Activated B cell treated with CpG ODN at 0.5 μM for 24 hours (primary cell): ENCODE measurements at regions of chr3 and their contacts with region 1.

Region 1: GRCh38 chr3:101902041-101902440 is 52.7 kb downstream of the NFKBIZ start:
- DNase-seq: no peak
- ATAC-seq: peak; percentile 56
- H3K4me3 Mint-ChIP-seq: peak overlapping the region; percentile 36
- H3K27ac Mint-ChIP-seq: peak overlapping the region; percentile 91
- H3K4me1 Mint-ChIP-seq: peaks cover 61% of the 10 kb centered on the region
- H3K27me3 Mint-ChIP-seq: no peaks in the 10 kb centered on the region
- CTCF ChIP-seq: no peak

Region 2: DNA sequence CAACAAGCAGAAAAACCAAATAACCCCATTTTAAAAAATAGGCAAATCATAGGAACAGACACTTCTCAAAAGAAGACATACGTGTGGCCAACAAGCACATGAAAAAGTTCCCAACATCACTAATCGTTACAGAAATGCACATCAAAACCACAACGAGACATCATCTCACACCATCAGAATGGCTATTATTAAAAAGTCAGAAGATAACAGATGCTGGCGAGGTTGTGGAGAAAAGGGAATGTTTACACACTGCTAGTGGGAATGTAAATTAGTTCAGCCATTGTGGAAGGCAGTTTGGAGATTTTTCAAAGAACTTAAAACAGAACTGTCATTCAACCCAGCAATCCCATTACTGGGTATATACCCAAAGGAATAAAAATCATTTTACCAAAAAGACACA is 969.5 kb before region 1 on chr3:
- CTCF ChIA-PET with region 1: no interaction called
- POLR2A ChIA-PET with region 1: no interaction called
- intact Hi-C with region 1: no loop called
- DNase-seq: no peak
- ATAC-seq: no peak
- H3K4me3 Mint-ChIP-seq: no peak overlapping the region
- H3K27ac Mint-ChIP-seq: no peak overlapping the region
- H3K4me1 Mint-ChIP-seq: no peaks in the 10 kb centered on the region
- H3K27me3 Mint-ChIP-seq: no peaks in the 10 kb centered on the region
- CTCF ChIP-seq: no peak

Region 3: DNA sequence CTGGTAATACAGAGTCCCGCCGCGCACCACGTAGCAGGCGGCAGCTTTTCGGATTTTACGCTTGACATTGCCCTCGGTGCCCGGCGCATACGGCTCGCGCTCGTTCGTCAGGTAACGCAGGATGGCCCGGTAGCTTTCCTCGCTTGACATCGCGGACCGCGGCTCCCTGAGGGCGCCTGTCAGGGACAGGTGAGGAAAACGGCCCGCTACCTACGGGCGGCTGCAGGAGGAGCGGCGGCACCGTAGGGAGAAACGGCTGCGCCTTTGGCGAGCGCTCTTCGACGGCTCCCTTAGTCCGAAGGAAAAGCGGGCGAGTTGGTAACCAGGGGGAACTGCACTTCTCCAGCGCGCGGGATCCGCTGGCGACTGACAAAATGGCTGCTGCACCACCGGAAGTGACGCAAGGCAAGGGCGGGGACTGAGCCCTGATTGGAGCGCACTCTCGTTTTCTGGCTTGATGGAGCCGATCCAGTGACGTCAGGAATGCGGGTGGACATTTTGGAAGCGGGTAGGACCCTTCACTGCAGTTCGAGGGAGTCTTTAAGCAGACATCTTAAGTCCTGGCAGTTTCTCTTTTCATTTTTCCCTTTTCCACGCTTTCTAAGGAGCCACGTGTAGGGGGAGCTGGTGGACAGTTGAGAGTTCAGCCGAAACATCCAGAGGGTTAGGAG is 225.1 kb before region 1 on chr3 and contains the start of gene ZBTB11:
- CTCF ChIA-PET with region 1: no interaction called
- POLR2A ChIA-PET with region 1: no interaction called
- intact Hi-C with region 1: loop called (anchors 5 kb)
- DNase-seq: peak; percentile 99
- ATAC-seq: peak; percentile 68
- H3K4me3 Mint-ChIP-seq: peak within 1 kb of the TSS; percentile 93
- H3K27ac Mint-ChIP-seq: peak within 1 kb of the TSS; percentile 96
- H3K4me1 Mint-ChIP-seq: peaks cover 56% of the 10 kb centered on the region
- H3K27me3 Mint-ChIP-seq: no peaks in the 10 kb centered on the region
- CTCF ChIP-seq: no peak
- total RNA-seq, gene ZBTB11: 26.2 and 28.7 TPM in 2 replicates

Region 4: GRCh38 chr3:101827211-101828174 is 74.5 kb before region 1 on chr3:
- CTCF ChIA-PET with region 1: no interaction called
- POLR2A ChIA-PET with region 1: interaction called, 5 read pairs
- intact Hi-C with region 1: loop called (anchors 2 kb)
- DNase-seq: peak; percentile 68
- ATAC-seq: peak; percentile 86
- H3K4me3 Mint-ChIP-seq: peak overlapping the region; percentile 87
- H3K27ac Mint-ChIP-seq: peak overlapping the region; percentile 98
- H3K4me1 Mint-ChIP-seq: peaks cover 66% of the 10 kb centered on the region
- H3K27me3 Mint-ChIP-seq: no peaks in the 10 kb centered on the region
- CTCF ChIP-seq: no peak

Region 5: DNA sequence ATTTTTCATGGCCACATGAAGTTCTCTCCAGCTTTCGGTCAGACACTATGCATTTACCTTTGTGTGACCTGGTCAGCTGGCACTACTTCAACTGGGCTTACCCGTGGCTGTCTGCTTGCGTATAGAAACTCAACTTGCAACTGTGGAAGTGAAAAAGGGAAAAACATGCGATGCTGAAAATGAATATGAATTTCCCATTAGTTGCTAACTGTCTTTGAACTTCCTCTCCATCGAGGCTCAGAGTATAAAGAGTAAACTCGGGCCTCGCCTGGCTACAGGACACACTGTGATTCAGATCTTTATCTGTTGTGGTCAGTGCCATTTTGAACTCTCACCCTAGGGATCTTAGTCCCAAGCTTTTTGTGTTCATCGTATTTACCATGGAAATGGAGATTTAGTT is 25.9 kb before region 1 on chr3:
- CTCF ChIA-PET with region 1: no interaction called
- POLR2A ChIA-PET with region 1: interaction called, 7 read pairs
- intact Hi-C with region 1: loop called (anchors 2 kb)
- DNase-seq: no peak
- ATAC-seq: peak; percentile 72
- H3K4me3 Mint-ChIP-seq: peak overlapping the region; percentile 21
- H3K27ac Mint-ChIP-seq: peak overlapping the region; percentile 81
- H3K4me1 Mint-ChIP-seq: peaks cover 51% of the 10 kb centered on the region
- H3K27me3 Mint-ChIP-seq: no peaks in the 10 kb centered on the region
- CTCF ChIP-seq: no peak

Region 6: GRCh38 chr3:101988591-101988990 is 86.5 kb after region 1 on chr3:
- CTCF ChIA-PET with region 1: no interaction called
- POLR2A ChIA-PET with region 1: no interaction called
- intact Hi-C with region 1: loop called (anchors 1 kb)
- DNase-seq: no peak
- ATAC-seq: peak; percentile 36
- H3K4me3 Mint-ChIP-seq: no peak overlapping the region
- H3K27ac Mint-ChIP-seq: peak overlapping the region; percentile 75
- H3K4me1 Mint-ChIP-seq: peaks cover 52% of the 10 kb centered on the region
- H3K27me3 Mint-ChIP-seq: no peaks in the 10 kb centered on the region
- CTCF ChIP-seq: no peak